Mammary epithelial cell (primary cell): ENCODE measurements at regions of chr6 and their contacts with region 1.

Region 1: GRCh38 chr6:109595998-109596397 is 95.0 kb downstream of the AK9 start:
- DNase-seq: peak; percentile 12
- H3K4me3 ChIP-seq: no peak overlapping the region
- H3K27ac ChIP-seq: no peak overlapping the region
- H3K4me1 ChIP-seq: no peaks in the 10 kb centered on the region
- H3K27me3 ChIP-seq: no peaks in the 10 kb centered on the region
- CTCF ChIP-seq: peak; percentile 30 to 74

Region 2: DNA sequence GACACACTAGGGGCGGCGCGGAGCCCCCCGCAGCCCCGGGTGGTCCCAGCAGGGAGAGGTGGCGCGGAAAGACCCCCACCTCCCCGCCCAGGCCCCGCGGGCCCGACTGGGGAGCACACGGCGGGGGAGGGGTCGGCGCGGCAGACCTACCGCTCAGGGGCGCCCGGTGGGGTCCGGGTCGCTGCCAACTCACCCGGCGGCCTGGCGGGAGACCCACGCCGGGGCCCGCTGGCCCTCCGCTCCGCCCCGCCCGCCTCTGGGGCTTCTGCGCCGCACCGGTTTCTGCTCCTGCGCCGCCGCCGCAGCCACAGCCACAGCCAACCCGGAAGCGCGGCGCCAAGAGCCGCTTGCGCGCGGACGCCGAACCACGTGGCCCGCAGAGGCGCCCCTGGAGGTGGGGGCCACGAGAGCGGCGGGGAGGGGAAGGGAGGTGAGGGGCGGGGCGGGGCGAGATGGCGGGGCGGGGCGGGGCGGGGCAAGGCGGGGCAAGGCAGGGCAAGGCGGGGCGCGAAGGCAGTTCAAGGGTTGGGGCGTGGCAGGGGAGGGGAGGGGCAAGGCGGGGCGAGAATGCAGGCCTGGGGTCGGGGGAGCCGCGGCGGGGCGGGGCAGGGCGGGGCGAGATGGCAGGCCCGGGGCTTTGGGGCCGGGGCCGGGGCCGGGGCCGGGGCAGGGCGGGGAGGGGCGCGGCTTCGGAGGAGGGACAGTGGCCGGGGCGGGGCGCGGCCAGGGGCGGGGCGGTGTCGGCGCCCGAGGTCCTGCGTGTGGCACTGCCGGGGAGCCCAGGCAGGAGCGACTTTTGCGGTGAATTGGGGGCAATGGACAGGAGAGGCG is 112.9 kb before region 1 on chr6 and contains the start of gene ZBTB24:
- CTCF ChIA-PET with region 1: no interaction called
- dilution Hi-C with region 1: no loop called
- in situ Hi-C with region 1: no loop called
- intact Hi-C with region 1: no loop called
- DNase-seq: peak; percentile 87
- H3K4me3 ChIP-seq: peak within 1 kb of the TSS; percentile 67 to 82 (median 70)
- H3K27ac ChIP-seq: peak within 1 kb of the TSS; percentile 68
- H3K4me1 ChIP-seq: peaks cover 16% of the 10 kb centered on the region
- H3K27me3 ChIP-seq: no peaks in the 10 kb centered on the region
- CTCF ChIP-seq: no peak
- total RNA-seq, gene ZBTB24: 7.9 to 10.0 TPM

Region 3: DNA sequence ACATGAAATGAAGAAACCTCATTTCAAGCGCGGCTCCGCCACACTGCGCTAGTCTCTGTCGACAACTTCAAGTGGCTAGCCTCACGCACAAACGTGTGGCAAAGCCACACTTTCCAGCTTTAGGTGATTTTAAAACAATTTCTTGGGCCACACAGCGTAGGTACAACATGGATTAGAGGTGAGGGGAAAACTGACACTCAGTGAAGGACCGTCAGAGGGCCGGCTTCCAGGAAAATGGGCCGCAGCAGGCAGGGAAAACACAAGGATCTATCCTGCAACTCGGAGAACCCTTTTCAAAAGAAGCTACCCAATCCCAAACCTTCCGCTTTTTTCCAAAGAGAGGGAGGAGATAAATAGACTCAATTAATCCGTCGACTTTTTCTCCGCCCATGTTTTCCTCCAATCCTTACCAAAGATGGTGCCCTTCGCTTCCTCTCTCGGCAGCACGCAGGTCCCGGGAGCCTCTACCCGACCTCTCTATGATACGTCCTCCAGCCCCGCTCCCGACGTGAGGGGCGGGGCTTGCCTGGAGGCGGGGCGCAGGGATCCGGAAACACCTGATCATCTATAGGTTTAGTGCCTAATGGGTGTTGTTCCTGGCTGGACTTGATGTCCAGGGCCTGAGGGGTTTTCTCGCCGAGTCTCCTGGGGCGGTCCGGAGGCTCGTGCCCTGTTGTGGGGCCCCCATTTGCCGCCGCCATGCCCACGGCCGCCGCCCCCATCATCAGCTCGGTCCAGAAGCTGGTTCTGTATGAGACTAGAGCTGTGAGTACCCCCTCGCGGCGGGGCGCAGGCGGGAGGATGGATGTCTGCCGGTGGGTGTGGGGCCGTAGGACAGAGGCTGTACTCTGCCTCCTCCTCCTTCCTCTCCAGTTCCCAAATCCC is 95.0 kb after region 1 on chr6 and contains the starts of genes AK9 and FIG4:
- CTCF ChIA-PET with region 1: no interaction called
- dilution Hi-C with region 1: no loop called
- in situ Hi-C with region 1: loop called in 1 of 2 experiments (anchors 10 kb)
- intact Hi-C with region 1: loop called (anchors 1 kb)
- DNase-seq: peak; percentile 90
- H3K4me3 ChIP-seq: peak within 1 kb of the TSS; percentile 77 to 94 (median 78)
- H3K27ac ChIP-seq: peak within 1 kb of the TSS; percentile 52
- H3K4me1 ChIP-seq: peaks cover 28% of the 10 kb centered on the region
- H3K27me3 ChIP-seq: no peaks in the 10 kb centered on the region
- CTCF ChIP-seq: peak in 1 of 2 donors; percentile 42
- total RNA-seq, gene AK9: 2.2 to 2.4 TPM
- total RNA-seq, gene FIG4: 12.2 to 17.2 TPM